ENCODE measurements at regions of chr2 and their contacts with region 1.

Region 1: GRCh38 chr2:120109186-120110061 is 96.5 kb downstream of the EPB41L5 start:
- DNase-seq: peak; percentile 57
- H3K4me3 ChIP-seq: no peak overlapping the region
- H3K27ac ChIP-seq: no peak overlapping the region
- H3K4me1 ChIP-seq: no peaks in the 10 kb centered on the region
- H3K27me3 ChIP-seq: no peaks in the 10 kb centered on the region
- CTCF ChIP-seq: peak; percentile 74

Region 2: DNA sequence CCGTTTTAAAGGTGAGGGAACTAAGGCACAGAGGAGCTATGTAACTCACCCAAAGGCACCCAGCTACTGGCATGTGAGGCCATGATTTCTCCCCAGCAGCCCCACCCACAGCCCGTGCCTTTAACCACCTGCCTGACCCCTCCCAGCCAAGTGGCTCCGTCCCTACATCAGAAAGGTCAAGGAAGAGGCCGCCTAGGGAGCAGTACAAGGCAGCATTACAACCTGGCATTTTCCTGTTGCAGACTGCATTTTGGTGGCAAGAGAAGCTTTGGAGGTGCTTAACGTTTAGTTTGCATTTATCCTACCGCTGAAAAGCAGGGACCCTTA is 868.3 kb before region 1 on chr2:
- CTCF ChIA-PET with region 1: interaction called, 16 read pairs
- POLR2A ChIA-PET with region 1: no interaction called
- intact Hi-C with region 1: no loop called
- DNase-seq: no peak
- H3K4me3 ChIP-seq: no peak overlapping the region
- H3K27ac ChIP-seq: no peak overlapping the region
- H3K4me1 ChIP-seq: peaks cover 10% of the 10 kb centered on the region
- H3K27me3 ChIP-seq: no peaks in the 10 kb centered on the region
- CTCF ChIP-seq: no peak

Region 3: GRCh38 chr2:119826370-119826961 is 283.0 kb before region 1 on chr2:
- CTCF ChIA-PET with region 1: no interaction called
- POLR2A ChIA-PET with region 1: no interaction called
- intact Hi-C with region 1: no loop called
- DNase-seq: peak; percentile 84
- H3K4me3 ChIP-seq: no peak overlapping the region
- H3K27ac ChIP-seq: peak overlapping the region; percentile 0
- H3K4me1 ChIP-seq: peaks cover 12% of the 10 kb centered on the region
- H3K27me3 ChIP-seq: no peaks in the 10 kb centered on the region
- CTCF ChIP-seq: peak; percentile 81

Region 4: GRCh38 chr2:120403261-120404020 is 294.0 kb after region 1 on chr2:
- CTCF ChIA-PET with region 1: no interaction called
- POLR2A ChIA-PET with region 1: no interaction called
- intact Hi-C with region 1: no loop called
- DNase-seq: no peak
- H3K4me3 ChIP-seq: no peak overlapping the region
- H3K27ac ChIP-seq: no peak overlapping the region
- H3K4me1 ChIP-seq: no peaks in the 10 kb centered on the region
- H3K27me3 ChIP-seq: no peaks in the 10 kb centered on the region
- CTCF ChIP-seq: no peak

Measured in A673 (cell line).